MCF 10A (cell line): ENCODE measurements at regions of chr4 and their contacts with region 1.

Region 1: GRCh38 chr4:124275-125081 is at the start of gene ZNF718:
- DNase-seq: peak; percentile 98
- H3K4me3 Mint-ChIP-seq: peak within 1 kb of the TSS; percentile 91
- H3K27ac Mint-ChIP-seq: peak within 1 kb of the TSS; percentile 98
- H3K4me1 Mint-ChIP-seq: peaks cover 5% of the 10 kb centered on the region
- H3K27me3 Mint-ChIP-seq: no peaks in the 10 kb centered on the region
- CTCF ChIP-seq: no peak
- total RNA-seq, gene ZNF718: 10.8 and 12.2 TPM in 2 replicates

Region 2: GRCh38 chr4:114149-114548 is 10.3 kb before region 1 on chr4:
- CTCF ChIA-PET with region 1: no interaction called
- POLR2A ChIA-PET with region 1: interaction called, 28 read pairs
- intact Hi-C with region 1: no loop called
- DNase-seq: peak; percentile 38
- H3K4me3 Mint-ChIP-seq: no peak overlapping the region
- H3K27ac Mint-ChIP-seq: no peak overlapping the region
- H3K4me1 Mint-ChIP-seq: peaks cover 9% of the 10 kb centered on the region
- H3K27me3 Mint-ChIP-seq: no peaks in the 10 kb centered on the region
- CTCF ChIP-seq: no peak

Region 3: GRCh38 chr4:138935-139334 is 14.5 kb after region 1 on chr4:
- CTCF ChIA-PET with region 1: no interaction called
- POLR2A ChIA-PET with region 1: interaction called, 12 read pairs
- intact Hi-C with region 1: no loop called
- DNase-seq: no peak
- H3K4me3 Mint-ChIP-seq: no peak overlapping the region
- H3K27ac Mint-ChIP-seq: no peak overlapping the region
- H3K4me1 Mint-ChIP-seq: no peaks in the 10 kb centered on the region
- H3K27me3 Mint-ChIP-seq: no peaks in the 10 kb centered on the region
- CTCF ChIP-seq: no peak

Region 4: DNA sequence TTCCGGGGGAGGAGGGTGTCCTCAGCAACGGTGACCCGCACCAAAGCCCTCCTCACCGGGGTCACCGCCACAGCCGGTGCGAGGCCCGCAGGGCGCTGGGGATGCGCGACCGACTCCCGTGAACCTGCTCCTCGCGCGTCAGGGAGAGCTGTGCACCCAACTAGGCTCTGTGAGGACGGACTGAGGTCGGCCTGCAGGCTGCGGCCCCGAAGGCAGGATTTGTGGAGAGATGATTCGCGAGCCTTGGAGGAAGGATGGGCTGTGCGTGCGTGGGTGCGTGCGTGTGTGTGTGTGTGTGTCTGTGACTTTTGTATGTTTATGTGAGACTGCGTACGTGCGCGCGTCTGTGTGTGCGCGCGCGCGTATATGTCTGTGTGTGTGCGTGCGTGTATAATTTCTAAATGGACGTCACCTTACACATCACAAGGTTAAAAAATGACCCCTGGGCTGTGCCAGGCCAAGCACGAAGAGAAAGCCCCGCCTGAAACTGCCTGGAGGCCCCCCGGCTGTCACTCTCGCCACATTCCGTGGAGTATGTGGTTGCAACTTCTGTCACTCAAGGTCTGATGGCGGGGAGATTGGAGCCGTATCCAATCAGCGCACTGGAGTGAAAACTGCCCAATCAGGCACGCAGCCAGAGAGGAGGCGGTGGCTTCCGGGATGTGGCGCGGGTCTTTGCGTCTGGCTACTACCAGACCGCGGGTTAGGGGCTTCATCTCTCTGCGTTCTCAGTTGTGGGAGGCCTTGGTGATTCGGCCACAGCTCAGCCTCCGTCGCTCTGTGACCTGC is 212.9 kb after region 1 on chr4 and contains the start of gene ZNF141:
- CTCF ChIA-PET with region 1: no interaction called
- POLR2A ChIA-PET with region 1: interaction called, 16 read pairs
- intact Hi-C with region 1: no loop called
- DNase-seq: peak; percentile 98
- H3K4me3 Mint-ChIP-seq: peak within 1 kb of the TSS; percentile 86
- H3K27ac Mint-ChIP-seq: peak within 1 kb of the TSS; percentile 95
- H3K4me1 Mint-ChIP-seq: no peaks in the 10 kb centered on the region
- H3K27me3 Mint-ChIP-seq: no peaks in the 10 kb centered on the region
- CTCF ChIP-seq: no peak
- total RNA-seq, gene ZNF141: 11.3 and 11.6 TPM in 2 replicates

Region 5: GRCh38 chr4:592825-593520 is 468.5 kb after region 1 on chr4:
- CTCF ChIA-PET with region 1: no interaction called
- POLR2A ChIA-PET with region 1: no interaction called
- intact Hi-C with region 1: no loop called
- DNase-seq: no peak
- H3K4me3 Mint-ChIP-seq: no peak overlapping the region
- H3K27ac Mint-ChIP-seq: no peak overlapping the region
- H3K4me1 Mint-ChIP-seq: no peaks in the 10 kb centered on the region
- H3K27me3 Mint-ChIP-seq: peaks cover 87% of the 10 kb centered on the region
- CTCF ChIP-seq: no peak